Activated CD4-positive, alpha-beta memory T cell treated with anti-CD3 and anti-CD28 coated beads for 36 hours (primary cell): ENCODE measurements at regions of chr6 and their contacts with region 1.

Region 1: GRCh38 chr6:63635588-63636517 is at the start of gene PHF3:
- DNase-seq: peak; percentile 93
- H3K4me3 Mint-ChIP-seq: peak within 1 kb of the TSS; percentile 98
- H3K27ac Mint-ChIP-seq: peak within 1 kb of the TSS; percentile 96
- H3K4me1 Mint-ChIP-seq: peaks cover 45% of the 10 kb centered on the region
- H3K27me3 Mint-ChIP-seq: no peaks in the 10 kb centered on the region
- total RNA-seq, gene PHF3: 43.0 to 43.2 TPM

Region 2: GRCh38 chr6:63565727-63566625 is 69.9 kb before region 1 on chr6:
- CTCF ChIA-PET with region 1: no interaction called
- POLR2A ChIA-PET with region 1: no interaction called
- intact Hi-C with region 1: no loop called
- DNase-seq: no peak
- H3K4me3 Mint-ChIP-seq: no peak overlapping the region
- H3K27ac Mint-ChIP-seq: no peak overlapping the region
- H3K4me1 Mint-ChIP-seq: no peaks in the 10 kb centered on the region
- H3K27me3 Mint-ChIP-seq: peaks cover 4% of the 10 kb centered on the region

Region 3: DNA sequence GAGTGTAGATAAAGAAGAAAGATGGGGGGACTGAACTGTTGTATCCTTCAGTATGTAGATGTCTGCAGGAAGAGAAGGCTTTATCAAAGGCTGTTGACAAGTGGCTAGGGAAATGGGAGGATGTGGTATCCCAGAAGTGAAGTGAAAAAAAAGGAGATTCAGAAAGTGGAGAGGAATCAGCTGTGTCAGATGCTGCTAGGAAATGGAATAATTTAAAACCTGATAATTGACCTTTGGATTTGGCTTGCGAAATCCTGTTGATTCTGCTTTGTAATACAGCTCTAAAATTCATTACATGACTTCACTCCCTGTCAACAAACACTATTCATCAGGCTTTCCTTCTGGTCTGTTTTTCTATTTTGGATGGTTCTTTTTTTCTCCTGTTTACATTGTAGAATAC is 41.4 kb after region 1 on chr6:
- CTCF ChIA-PET with region 1: no interaction called
- POLR2A ChIA-PET with region 1: no interaction called
- intact Hi-C with region 1: loop called (anchors 5 kb)
- DNase-seq: no peak
- H3K4me3 Mint-ChIP-seq: no peak overlapping the region
- H3K27ac Mint-ChIP-seq: no peak overlapping the region
- H3K4me1 Mint-ChIP-seq: peaks cover 33% of the 10 kb centered on the region
- H3K27me3 Mint-ChIP-seq: no peaks in the 10 kb centered on the region

Region 4: DNA sequence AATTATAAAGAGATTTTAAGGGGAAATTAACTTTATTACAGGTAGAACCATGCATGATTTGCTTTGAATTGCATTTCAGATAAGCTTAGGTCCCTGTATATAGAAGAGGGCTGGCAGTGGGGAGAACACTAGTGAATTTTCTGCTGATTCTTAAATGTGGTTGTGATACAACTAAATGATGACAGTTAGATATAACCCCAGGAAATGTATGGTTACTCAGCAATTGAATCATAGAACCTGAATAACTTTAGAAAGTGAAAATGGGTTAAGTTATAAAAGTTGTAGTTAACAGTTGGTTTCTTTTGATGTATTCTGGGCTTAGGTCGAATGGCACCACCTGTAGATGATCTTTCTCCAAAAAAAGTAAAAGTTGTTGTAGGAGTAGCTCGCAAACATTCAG is 69.9 kb after region 1 on chr6:
- CTCF ChIA-PET with region 1: no interaction called
- POLR2A ChIA-PET with region 1: no interaction called
- intact Hi-C with region 1: loop called (anchors 1 kb)
- DNase-seq: no peak
- H3K4me3 Mint-ChIP-seq: no peak overlapping the region
- H3K27ac Mint-ChIP-seq: no peak overlapping the region
- H3K4me1 Mint-ChIP-seq: peaks cover 11% of the 10 kb centered on the region
- H3K27me3 Mint-ChIP-seq: no peaks in the 10 kb centered on the region